ENCODE measurements at regions of chr14 and their contacts with region 1.

Region 1: DNA sequence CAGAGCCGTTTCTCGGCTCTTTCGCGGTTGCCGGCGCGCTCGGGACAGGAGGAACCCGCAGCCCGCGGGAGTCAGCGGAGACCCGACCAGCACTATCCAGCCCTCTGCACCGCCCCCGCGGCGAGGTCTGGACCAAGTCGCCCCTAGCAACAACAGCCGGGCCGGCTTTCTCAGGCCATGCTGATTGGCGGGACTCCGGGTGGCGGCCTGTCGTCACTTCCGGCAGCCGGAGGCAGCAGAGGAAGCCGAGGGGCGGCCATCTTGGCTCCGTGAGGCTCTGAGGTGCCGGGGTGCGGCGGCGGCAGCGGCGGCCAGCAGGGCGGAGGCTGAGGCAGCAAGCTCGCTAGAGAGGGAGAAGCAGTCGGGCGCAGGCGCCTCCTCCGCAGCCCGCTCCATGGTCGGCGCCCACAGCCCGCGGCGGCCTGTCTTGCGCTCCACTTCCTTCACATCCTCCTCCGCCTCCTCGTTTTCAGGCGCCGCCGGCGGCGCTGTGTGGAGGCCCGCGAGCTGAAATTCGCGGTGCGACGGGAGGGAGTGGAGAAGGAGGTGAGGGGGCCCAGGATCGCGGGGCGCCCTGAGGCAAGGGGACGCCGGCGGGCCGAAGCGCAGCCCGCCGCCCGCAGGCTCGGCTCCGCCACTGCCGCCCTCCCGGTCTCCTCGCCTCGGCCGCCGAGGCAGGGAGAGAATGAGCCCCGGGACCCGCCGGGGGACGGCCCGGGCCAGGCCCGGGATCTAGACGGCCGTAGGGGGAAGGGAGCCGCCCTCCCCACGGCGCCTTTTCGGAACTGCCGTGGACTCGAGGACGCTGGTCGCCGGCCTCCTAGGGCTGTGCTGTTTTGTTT is at the start of gene MARK3:
- DNase-seq: peak; percentile 94 to 99 (median 98)

Region 2: DNA sequence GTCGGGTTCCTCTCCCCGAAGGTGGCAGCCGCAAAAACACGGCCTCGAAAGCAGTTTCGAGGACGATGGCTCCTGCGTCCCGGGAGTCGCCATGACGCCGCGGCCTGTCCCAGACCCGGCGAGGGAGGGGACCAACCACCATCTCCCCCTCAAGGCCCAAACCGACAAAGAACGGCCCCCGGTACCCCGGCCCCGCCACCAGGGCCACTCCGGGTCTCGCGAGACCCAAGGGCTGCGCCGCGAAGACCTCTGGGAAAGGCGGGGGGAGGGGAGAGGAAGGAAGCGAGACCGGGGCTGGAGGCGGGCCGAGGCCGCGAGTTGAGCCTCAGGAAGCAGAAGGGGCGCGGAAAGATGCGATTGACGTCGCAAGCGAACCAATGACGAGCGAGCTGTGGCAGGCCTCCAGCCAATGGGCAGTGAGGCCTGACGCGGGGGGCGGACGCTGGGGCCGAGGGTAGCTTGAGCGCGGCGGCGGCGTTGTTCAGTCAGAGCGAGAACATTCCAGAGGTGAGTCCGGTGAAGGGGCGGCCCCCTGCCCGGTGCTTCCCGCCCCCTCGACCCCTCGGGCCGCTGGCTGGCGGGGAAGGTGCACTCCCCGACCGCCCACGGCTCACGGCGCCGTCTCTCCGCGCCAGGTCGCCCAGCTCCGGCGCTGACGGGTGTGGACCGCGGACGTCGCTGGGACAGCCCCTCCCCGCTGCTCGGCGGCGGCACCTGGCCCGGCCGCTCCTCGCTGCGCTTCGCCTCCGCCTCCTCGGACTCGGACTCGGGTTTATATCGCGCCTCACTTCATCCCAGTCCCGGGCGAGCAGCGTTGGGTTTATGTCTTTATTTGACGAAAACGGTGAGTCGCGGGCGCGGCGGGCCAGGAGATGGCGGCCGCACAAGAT is 51.4 kb before region 1 on chr14 and contains the start of gene EIF5:
- intact Hi-C with region 1: loop called (anchors 2 kb)
- DNase-seq: peak; percentile 97 to 100 (median 99)

Region 3: GRCh38 chr14:103840014-103840413 is 454.6 kb after region 1 on chr14:
- intact Hi-C with region 1: no loop called
- DNase-seq: no peak